Mammary epithelial cell (primary cell): ENCODE measurements at regions of chr19 and their contacts with region 1.

Region 1: GRCh38 chr19:1324806-1325567 is 39.3 kb downstream of the EFNA2 start:
- DNase-seq: peak; percentile 57
- H3K4me3 ChIP-seq: peak overlapping the region in 2 of 3 experiments; percentile 24 to 30
- H3K27ac ChIP-seq: no peak overlapping the region
- H3K4me1 ChIP-seq: peaks cover 10% of the 10 kb centered on the region
- H3K27me3 ChIP-seq: peaks cover 2% of the 10 kb centered on the region
- CTCF ChIP-seq: no peak

Region 2: GRCh38 chr19:1355568-1356507 is 30.9 kb after region 1 on chr19:
- CTCF ChIA-PET with region 1: no interaction called
- dilution Hi-C with region 1: loop called (anchors 5 kb)
- in situ Hi-C with region 1: no loop called
- intact Hi-C with region 1: no loop called
- DNase-seq: peak; percentile 12
- H3K4me3 ChIP-seq: peak overlapping the region; percentile 79 to 88 (median 82)
- H3K27ac ChIP-seq: no peak overlapping the region
- H3K4me1 ChIP-seq: peaks cover 9% of the 10 kb centered on the region
- H3K27me3 ChIP-seq: no peaks in the 10 kb centered on the region
- CTCF ChIP-seq: no peak